Uterus (tissue), 4 donors: ENCODE measurements at regions of chr3 and their contacts with region 1.

Region 1: DNA sequence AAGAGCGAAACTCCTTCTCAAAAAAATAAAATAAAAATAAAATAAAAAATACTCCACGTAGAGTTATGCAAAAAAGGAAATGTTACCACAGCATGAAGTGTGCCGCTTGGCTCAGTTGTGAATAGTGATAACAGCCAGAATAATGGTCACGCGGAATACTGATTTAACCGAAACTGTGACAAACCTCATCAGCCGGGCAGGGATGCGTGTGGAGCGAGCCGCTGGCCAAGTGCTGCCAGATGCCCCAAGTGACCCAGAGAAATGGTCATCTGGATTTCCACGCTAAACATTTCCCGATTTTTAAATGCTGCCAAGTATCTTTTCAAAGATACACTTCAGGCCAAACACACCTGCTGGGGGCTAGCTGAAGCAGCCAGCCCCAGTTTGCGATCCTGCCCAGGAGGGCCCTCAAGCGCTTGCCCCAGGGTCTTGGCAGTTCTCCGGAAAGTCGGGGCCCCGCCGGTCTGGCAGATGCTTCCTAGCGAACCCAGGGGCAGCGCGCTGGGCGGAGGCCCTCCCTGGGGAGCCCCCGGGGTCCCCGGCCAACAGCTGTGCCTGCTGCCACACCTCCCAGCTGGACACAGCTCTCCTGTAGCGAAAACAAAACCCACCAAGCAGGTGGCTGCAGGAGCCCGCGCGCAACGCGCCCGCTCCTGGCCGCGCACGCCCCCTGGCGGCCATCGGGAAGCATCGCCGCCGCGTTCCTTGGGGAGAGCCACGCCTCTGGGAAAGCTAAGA is 35.1 kb downstream of the CMTM6 start:
- DNase-seq: peak; percentile 47 to 70
- H3K4me3 ChIP-seq: peak overlapping the region in 1 of 2 donors; percentile 33
- H3K27ac ChIP-seq: no peak overlapping the region
- H3K4me1 ChIP-seq: no peaks in the 10 kb centered on the region
- H3K27me3 ChIP-seq: no peaks in the 10 kb centered on the region
- CTCF ChIP-seq: peak; percentile 92 to 99 (median 95)
- POLR2A ChIP-seq: no peak

Region 2: GRCh38 chr3:32276279-32276847 is 191.1 kb before region 1 on chr3:
- intact Hi-C with region 1: no loop called
- DNase-seq: no peak
- H3K4me3 ChIP-seq: no peak overlapping the region
- H3K27ac ChIP-seq: no peak overlapping the region
- H3K4me1 ChIP-seq: no peaks in the 10 kb centered on the region
- H3K27me3 ChIP-seq: no peaks in the 10 kb centered on the region
- CTCF ChIP-seq: no peak
- POLR2A ChIP-seq: no peak

Region 3: DNA sequence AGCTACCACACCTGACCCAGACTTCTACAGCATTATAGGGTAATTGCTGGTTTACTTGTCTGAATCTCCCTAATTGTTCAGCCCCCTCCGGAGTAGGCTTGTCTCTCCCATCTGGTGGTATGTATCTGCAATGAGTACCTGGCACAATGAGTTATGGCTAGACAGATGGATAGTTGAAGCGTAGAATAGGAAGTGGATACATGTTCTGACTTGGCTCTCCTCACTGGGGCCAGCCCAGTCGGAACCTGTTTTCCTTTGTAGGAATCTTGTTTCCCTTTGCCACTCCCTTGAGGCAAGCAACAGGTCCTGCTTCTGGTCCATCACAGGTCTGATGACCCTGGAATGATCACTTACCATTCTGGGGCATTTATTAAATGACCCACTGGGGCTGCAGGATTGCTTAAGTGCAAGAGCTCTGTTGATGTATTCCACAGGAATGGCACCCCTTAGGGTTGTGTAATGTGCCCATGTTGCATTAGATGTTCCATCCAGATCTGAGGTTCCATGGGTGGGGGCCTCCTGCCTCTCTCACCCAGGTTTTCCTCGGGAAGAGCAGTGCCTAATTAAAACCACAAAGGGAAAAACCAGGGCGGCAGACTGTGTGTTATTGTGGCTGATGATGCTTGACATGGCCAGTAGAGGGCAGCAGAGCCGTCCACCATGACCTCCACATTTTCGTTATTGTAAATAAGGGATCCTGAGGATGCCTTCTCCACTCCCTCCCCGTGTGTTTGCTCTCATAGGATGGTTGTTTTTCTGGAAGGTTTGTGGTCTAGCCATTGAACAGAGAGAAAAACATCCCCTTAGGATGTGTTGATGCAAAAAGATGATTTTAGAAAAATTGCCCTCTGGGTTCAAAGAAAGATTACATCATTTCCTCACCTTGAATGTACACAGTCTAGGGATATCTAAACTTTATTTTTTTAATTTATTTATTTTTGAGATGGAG is 171.0 kb before region 1 on chr3:
- intact Hi-C with region 1: loop called (anchors 10 kb)
- DNase-seq: peak; percentile 43 to 49
- H3K4me3 ChIP-seq: no peak overlapping the region
- H3K27ac ChIP-seq: no peak overlapping the region
- H3K4me1 ChIP-seq: no peaks in the 10 kb centered on the region
- H3K27me3 ChIP-seq: no peaks in the 10 kb centered on the region
- CTCF ChIP-seq: peak; percentile 64 to 87 (median 76)
- POLR2A ChIP-seq: no peak

Region 4: DNA sequence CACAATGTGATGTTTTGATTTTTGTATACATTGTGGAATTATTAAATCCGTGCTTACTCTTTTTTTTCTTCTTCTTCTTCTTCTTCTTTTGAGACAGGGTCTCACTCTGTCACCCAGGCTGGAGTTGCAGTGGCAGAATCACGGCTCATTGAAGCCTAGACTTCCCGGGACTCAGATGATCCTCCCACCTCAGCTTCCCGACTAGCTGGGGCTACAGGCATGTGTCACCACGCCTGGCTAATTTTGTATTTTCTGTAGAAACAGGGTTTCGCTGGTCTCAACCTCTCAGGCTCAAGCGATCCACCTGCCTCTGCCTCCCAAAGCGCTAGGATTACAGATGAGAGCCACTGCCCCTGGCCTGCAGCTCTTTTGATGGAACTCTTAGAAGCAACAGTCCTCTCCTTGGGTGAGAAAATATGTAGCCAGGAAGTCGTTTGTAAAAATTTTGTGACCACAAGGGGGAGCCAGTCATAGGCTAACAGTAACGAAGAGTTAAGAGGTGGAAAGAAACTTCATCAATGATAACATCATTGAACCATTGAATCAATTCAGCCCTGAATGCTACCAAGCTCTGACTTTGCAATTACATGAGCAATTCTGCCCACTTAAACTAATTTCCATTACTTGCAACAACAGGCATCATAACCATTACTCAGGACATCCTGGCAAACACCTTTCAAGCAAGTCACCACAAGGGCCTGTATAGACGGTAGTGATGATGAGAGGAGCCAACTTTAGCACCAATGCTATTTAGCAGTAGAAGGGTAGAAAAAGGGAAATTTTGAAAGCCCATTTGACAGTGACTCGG is 92.5 kb before region 1 on chr3:
- intact Hi-C with region 1: loop called (anchors 5 kb)
- DNase-seq: peak; percentile 22 to 65
- H3K4me3 ChIP-seq: no peak overlapping the region
- H3K27ac ChIP-seq: no peak overlapping the region
- H3K4me1 ChIP-seq: no peaks in the 10 kb centered on the region
- H3K27me3 ChIP-seq: no peaks in the 10 kb centered on the region
- CTCF ChIP-seq: peak; percentile 64 to 67 (median 65)
- POLR2A ChIP-seq: no peak